ENCODE measurements at regions of chr2 and their contacts with region 1.

Region 1: DNA sequence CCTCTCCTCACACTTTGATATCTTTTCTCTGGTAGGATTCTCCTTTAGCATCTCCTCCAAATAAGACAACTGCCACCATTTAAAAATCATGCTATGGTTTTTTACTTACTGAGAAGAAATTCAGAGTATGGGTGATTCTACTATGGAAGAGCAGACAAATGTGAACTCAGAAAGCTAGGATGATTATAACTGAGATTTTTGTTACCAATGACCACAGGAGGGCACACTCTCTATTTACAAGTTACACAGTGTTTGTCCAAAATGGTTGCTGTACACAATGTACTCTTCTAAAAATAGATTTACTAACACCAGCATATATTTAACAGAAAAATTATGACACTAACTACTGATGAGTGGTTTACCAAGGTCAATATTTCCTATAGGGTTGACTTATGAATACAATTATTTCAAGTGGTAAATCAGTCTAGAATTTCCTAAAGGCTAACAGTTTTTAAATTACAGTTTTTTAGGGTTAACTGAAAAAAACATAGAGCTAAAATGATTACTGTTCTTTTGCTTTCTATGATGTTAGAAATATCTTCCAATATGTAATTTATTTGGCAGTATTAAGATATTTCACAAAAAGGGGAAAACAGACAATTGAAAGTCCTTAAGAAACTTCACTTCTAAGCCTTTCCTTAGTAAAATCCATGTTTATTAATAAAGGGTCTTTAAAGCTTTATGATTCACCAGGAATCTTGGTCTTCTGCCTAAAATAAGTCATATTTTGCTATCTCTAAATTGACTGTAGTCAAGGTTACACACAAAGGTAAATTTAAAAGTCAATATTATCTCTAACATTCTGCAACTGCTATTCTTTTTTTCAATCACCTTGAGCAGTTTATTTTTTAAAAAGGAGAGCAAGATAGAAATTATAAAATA is 57.2 kb downstream of the MAP4K3 start:
- DNase-seq: no peak
- ATAC-seq: peak; percentile 83 to 85

Region 2: GRCh38 chr2:39227628-39228412 is 152.1 kb before region 1 on chr2:
- intact Hi-C with region 1: no loop called
- DNase-seq: peak; percentile 83
- ATAC-seq: peak; percentile 91 to 93

Region 3: DNA sequence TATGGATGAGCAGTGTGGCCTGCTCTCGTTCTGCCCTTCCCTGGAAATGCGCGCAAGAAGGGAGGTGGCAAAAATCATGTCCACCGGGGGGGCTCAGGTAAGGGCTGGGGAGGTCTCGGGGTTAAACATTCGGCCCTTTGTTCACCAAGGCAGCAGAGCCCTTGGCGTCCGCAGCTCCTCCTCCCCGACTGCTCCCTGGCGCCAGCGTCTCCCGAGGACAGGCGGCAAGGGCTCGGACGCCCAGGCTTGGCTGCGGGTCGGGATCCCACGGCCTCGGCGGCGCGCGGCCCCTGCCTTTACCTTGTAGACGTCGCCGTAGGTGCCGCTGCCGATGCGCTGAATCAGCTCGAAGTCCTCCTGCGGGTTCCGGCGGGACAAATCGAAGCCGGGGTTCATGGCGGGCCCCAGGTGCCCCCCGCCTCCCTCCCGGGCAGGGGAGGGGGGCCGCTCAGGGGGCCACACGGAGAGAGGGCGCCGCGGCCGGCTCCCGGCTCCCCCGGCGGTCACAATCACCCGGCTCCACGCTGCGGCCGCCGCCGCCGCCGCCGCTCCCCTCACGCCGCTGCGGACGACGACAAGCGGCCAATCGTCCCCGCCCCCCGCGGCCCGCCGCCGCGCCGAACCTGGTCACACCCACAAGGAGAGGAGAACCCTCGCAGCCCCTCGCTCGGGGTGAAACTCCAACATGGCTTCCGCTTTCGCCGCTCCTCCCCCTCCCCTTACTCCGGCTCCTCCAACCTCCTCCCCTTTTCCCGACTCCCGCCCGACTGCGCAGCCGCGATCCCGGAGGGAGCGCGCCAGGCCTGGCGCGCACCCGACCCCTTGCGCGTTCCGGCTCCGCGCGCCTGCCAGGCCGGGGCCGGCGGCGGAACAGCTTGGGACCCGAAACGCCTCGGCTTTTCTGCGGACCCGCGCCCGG is 57.0 kb after region 1 on chr2 and contains the start of gene MAP4K3:
- intact Hi-C with region 1: loop called in 1 of 2 experiments (anchors 2 kb)
- DNase-seq: peak; percentile 94
- ATAC-seq: peak; percentile 95
- total RNA-seq, gene MAP4K3: 28.0 to 31.2 TPM

Region 4: DNA sequence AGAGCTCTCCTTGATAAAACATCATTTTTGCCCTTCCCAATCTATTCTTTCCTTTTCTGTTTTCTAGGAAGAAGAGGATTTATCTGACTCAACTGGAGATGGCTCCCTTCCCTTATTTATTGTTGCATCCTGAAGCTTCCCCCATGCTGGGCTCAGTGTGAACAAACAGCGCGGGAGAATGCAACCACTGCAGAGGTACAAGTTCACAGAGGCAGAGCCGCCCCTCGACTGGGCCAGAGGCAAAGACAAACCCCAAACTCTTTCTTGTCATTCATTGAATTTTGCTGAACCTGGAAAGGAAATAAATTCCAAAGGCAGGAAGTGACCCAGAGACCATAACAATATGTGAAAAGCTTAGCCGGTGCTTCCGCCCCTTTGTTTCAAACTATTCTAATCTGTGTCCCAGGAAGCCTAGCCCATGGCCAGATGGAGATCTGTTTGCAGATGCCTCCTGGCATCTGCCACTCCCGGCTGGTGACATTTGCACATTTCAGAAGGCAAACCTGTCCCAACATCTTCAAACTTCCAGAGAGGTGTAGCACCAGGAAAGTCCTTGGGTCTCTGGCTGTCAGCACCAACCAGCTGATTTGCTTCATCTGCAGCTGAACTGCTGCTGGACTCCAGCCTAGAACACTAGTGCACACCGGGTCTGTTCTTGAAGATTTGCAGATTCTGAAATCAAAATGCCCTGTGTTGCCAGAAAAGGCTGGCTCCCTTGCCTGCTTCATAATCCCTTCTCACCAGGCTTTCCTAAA is 136.6 kb after region 1 on chr2:
- intact Hi-C with region 1: loop called in 1 of 2 experiments (anchors 5 kb)
- DNase-seq: peak; percentile 57
- ATAC-seq: peak; percentile 61 to 64

Region 5: GRCh38 chr2:39696838-39697237 is 317.0 kb after region 1 on chr2:
- intact Hi-C with region 1: loop called in 1 of 2 experiments (anchors 5 kb)
- DNase-seq: no peak
- ATAC-seq: peak; percentile 73 to 74